ENCODE measurements at regions of chrX and their contacts with region 1.

Region 1: GRCh38 chrX:48794911-48795501 is 6.9 kb upstream of the HDAC6 start:
- DNase-seq: no peak
- ATAC-seq: no peak
- H3K4me3 ChIP-seq: no peak overlapping the region
- H3K4me3 Mint-ChIP-seq: no peak overlapping the region
- H3K27ac ChIP-seq: no peak overlapping the region
- H3K27ac Mint-ChIP-seq: no peak overlapping the region
- H3K4me1 ChIP-seq: no peaks in the 10 kb centered on the region
- H3K4me1 Mint-ChIP-seq: no peaks in the 10 kb centered on the region
- H3K27me3 ChIP-seq: no peaks in the 10 kb centered on the region
- H3K27me3 Mint-ChIP-seq: no peaks in the 10 kb centered on the region
- CTCF ChIP-seq: no peak

Region 2: DNA sequence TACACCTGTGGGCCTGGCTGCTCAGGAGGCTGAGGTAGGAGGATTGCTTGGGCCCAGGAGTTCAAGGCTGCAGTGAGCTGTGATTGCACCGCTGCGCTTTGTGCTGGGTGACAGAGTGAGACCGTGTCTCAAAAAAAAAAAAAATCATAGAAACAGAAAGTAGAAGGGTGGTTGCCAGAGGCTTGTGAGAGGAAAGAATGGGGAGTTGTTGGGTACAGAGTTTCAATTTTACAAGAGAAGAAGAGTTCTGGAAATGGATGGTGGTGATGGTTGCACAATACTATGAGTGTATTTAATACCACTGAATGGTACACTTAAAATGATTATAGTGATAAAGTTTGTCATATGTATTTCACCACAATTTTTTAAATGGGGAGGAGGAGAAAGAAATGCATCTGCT is 43.7 kb before region 1 on chrX:
- CTCF ChIA-PET with region 1: no interaction called
- POLR2A ChIA-PET with region 1: no interaction called
- intact Hi-C with region 1: loop called in 1 of 2 experiments (anchors 5 kb)
- DNase-seq: no peak
- ATAC-seq: no peak
- H3K4me3 ChIP-seq: no peak overlapping the region
- H3K4me3 Mint-ChIP-seq: no peak overlapping the region
- H3K27ac ChIP-seq: no peak overlapping the region
- H3K27ac Mint-ChIP-seq: no peak overlapping the region
- H3K4me1 ChIP-seq: no peaks in the 10 kb centered on the region
- H3K4me1 Mint-ChIP-seq: no peaks in the 10 kb centered on the region
- H3K27me3 ChIP-seq: no peaks in the 10 kb centered on the region
- H3K27me3 Mint-ChIP-seq: no peaks in the 10 kb centered on the region
- CTCF ChIP-seq: no peak

Measured in CD4-positive, alpha-beta T cell (primary cell).